Gastrocnemius medialis (tissue), 4 donors: ENCODE measurements at regions of chr2 and their contacts with region 1.

Region 1: GRCh38 chr2:232521959-232522622 is 1.9 kb downstream of the PRSS56 start:
- DNase-seq: peak in 1 of 2 donors; percentile 44
- ATAC-seq: peak; percentile 12 to 18
- H3K4me3 ChIP-seq: peak overlapping the region; percentile 27 to 49 (median 38)
- H3K27ac ChIP-seq: peak overlapping the region in 1 of 4 donors; percentile 93
- H3K4me1 ChIP-seq: peaks cover 18 to 34% of the 10 kb centered on the region in 2 donors
- H3K27me3 ChIP-seq: peaks cover 0 to 7% (median 0%) of the 10 kb centered on the region in 3 donors
- CTCF ChIP-seq: peak in 4 of 5 experiments; percentile 85 to 97 (median 96)
- POLR2A ChIP-seq: no peak

Region 2: GRCh38 chr2:231900486-231900942 is 621.6 kb before region 1 on chr2:
- in situ Hi-C with region 1: loop called in 1 of 4 experiments (anchors 25 kb)
- intact Hi-C with region 1: no loop called
- DNase-seq: peak; percentile 10 to 53
- ATAC-seq: peak in 1 of 2 donors; percentile 75
- H3K4me3 ChIP-seq: no peak overlapping the region
- H3K27ac ChIP-seq: no peak overlapping the region
- H3K4me1 ChIP-seq: no peaks in the 10 kb centered on the region
- H3K27me3 ChIP-seq: no peaks in the 10 kb centered on the region
- CTCF ChIP-seq: peak; percentile 32 to 67 (median 58)
- POLR2A ChIP-seq: no peak

Region 3: DNA sequence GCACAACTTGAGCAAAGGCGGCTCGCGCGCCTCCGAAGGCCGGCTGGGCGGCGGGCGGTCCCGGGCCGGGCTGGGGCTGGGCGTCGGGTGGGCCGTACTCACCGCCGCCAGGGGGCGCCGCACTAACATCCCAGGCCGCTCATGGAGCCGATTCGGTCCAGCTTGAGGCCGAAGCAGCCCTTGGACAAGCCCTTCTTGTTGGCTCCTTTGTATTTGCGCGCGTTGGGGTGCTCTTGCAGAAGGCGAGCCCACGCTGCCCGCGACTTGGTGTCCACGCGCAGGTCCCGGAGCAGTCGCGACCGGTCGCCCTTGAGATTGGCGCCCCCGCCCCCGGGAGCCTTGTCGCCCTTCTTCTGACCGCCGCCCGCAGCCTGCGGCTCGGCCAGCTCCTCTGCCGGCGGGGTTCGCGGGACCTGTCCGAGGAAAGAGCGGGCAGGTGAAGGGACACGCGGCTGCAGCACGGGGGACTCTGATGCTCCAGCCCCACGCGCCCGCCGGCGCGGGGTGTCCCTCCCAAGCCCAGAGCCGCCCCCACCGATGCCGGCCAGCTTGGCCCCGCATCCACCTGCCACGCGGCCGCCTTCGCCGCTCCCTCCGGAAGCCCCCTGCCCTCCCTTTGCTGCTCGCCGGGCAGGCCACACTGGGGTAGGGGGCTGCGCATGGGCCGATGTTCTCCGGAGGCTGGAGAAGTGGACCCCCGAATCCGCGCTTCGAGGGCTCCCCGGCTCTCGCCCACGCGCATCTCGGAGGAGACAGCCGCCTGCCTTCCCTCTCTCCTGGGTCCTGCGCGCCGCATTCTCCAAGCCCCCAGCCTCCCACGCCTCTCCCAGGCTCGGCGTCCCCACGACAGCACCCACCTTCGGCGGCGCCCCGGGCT is 596.5 kb before region 1 on chr2:
- in situ Hi-C with region 1: loop called in 1 of 4 experiments (anchors 25 kb)
- intact Hi-C with region 1: loop called (anchors 2 kb)
- DNase-seq: peak; percentile 56 to 66
- ATAC-seq: peak; percentile 93 to 95
- H3K4me3 ChIP-seq: peak overlapping the region; percentile 48 to 66 (median 50)
- H3K27ac ChIP-seq: no peak overlapping the region
- H3K4me1 ChIP-seq: peaks cover 8 to 21% of the 10 kb centered on the region in 2 donors
- H3K27me3 ChIP-seq: peaks cover 29 to 65% (median 57%) of the 10 kb centered on the region in 3 donors
- CTCF ChIP-seq: peak; percentile 76 to 95 (median 92)
- POLR2A ChIP-seq: no peak

Region 4: DNA sequence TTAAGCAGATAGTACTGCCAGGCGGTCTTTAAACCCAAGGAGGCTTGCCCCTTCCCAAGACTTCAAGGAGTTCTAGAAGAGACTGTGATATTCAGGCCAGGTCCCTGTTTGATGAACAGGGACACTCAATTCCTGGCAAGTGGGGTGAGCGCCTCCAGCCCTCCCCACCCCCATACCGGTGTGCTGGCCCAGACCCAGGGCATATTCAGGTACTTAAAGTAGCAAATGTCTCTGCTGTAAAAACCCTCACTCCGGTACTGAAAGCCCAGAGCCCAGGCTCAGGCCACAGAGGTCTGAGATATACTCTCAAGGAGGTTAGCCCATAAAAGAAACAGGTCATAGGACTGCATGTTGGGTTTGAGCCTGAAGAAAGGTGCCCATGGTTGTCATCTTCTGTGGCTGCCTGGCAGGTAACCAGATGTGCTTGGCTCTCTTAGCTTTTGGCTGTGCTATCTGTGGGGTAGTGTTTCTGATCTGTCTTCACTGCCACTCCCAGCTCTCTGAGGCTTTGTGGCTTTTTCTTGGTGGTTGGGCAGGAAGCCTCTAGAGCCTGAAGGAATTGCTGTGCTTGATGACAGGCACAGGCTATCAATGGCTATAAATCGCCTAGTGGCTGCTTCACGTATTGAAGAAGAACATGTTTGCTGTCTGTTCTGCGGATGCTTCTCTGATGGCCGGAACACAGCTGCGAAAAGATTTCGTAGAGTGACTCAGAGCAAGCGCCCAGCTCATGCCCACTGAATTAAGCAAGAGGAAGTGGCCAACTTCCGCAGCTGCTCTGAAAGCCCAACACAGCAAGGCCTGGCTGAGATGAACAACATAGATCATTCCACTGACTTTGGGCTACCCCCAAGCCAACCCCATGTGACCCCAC is 206.8 kb before region 1 on chr2:
- in situ Hi-C with region 1: no loop called
- intact Hi-C with region 1: loop called (anchors 10 kb)
- DNase-seq: peak; percentile 78 to 85
- ATAC-seq: peak; percentile 96 to 97
- H3K4me3 ChIP-seq: no peak overlapping the region
- H3K27ac ChIP-seq: peak overlapping the region; percentile 74 to 81 (median 79)
- H3K4me1 ChIP-seq: peaks cover 19 to 33% of the 10 kb centered on the region in 2 donors
- H3K27me3 ChIP-seq: no peaks in the 10 kb centered on the region
- CTCF ChIP-seq: peak; percentile 27 to 63 (median 43)
- POLR2A ChIP-seq: no peak

Region 5: GRCh38 chr2:232350861-232351514 is 171.1 kb before region 1 on chr2:
- in situ Hi-C with region 1: no loop called
- intact Hi-C with region 1: no loop called
- DNase-seq: no peak
- ATAC-seq: no peak
- H3K4me3 ChIP-seq: no peak overlapping the region
- H3K27ac ChIP-seq: no peak overlapping the region
- H3K4me1 ChIP-seq: peaks cover 0 to 9% of the 10 kb centered on the region in 2 donors
- H3K27me3 ChIP-seq: peaks cover 46 to 70% (median 66%) of the 10 kb centered on the region in 3 donors
- CTCF ChIP-seq: no peak
- POLR2A ChIP-seq: no peak

Region 6: DNA sequence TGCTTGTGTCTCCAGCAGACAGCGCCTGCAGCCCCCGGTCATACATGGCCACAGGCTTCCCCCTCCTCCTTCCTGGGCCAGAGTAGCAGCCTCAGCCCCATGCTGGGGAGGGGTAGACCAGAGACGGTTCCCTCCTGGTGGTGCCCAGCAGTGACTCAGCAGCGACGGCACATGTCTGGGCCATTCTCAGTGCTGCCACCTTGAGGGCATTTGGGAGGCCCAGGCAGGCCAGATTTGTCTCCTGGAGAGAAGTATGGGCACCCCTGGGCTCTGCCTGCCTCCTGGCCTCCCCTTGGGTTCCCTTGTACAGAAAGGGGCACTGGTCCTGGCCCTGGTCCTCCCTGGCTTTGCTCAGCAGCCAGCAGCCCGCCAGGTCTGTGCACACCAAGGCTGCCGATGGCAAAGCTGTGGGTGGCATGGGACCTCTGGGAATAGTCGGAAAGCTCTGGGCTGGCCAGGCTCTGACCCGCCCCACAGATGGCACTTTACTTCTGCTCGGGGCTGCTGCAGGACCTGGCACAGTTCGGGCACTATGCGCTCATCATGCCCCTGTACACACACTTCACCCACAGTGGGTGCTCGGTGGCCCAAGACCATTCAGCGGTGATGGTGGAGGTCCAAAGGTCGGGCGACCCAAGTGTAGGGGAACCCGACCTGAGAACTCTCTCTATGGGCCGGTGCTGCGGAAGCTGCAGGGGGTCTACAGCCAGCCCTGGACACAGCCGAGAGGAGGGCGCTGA is 77.5 kb before region 1 on chr2:
- in situ Hi-C with region 1: no loop called
- intact Hi-C with region 1: loop called (anchors 1 kb)
- DNase-seq: peak in 1 of 2 donors; percentile 48
- ATAC-seq: peak in 1 of 2 donors; percentile 23
- H3K4me3 ChIP-seq: no peak overlapping the region
- H3K27ac ChIP-seq: peak overlapping the region; percentile 10 to 66 (median 36)
- H3K4me1 ChIP-seq: peaks cover 3 to 9% of the 10 kb centered on the region in 2 donors
- H3K27me3 ChIP-seq: no peaks in the 10 kb centered on the region
- CTCF ChIP-seq: peak in 4 of 5 experiments; percentile 19 to 56 (median 34)
- POLR2A ChIP-seq: no peak

Region 7: GRCh38 chr2:232550354-232551249 is 28.5 kb after region 1 on chr2 and contains the starts of genes EIF4E2 and TIGD1:
- in situ Hi-C with region 1: no loop called
- intact Hi-C with region 1: loop called (anchors 2 kb)
- DNase-seq: peak; percentile 93 to 96
- ATAC-seq: peak; percentile 89 to 92
- H3K4me3 ChIP-seq: peak within 1 kb of the TSS; percentile 70 to 100 (median 92)
- H3K27ac ChIP-seq: peak within 1 kb of the TSS; percentile 95 to 100 (median 99)
- H3K4me1 ChIP-seq: peaks cover 46 to 51% of the 10 kb centered on the region in 2 donors
- H3K27me3 ChIP-seq: no peaks in the 10 kb centered on the region
- CTCF ChIP-seq: peak; percentile 25 to 47 (median 45)
- POLR2A ChIP-seq: peak; percentile 86 to 88
- total RNA-seq, gene EIF4E2: 57.9 to 111 (median 71.2) TPM
- total RNA-seq, gene TIGD1: 1.4 to 3.0 (median 2.1) TPM